ENCODE measurements at regions of chrX and their contacts with region 1.

Region 1: DNA sequence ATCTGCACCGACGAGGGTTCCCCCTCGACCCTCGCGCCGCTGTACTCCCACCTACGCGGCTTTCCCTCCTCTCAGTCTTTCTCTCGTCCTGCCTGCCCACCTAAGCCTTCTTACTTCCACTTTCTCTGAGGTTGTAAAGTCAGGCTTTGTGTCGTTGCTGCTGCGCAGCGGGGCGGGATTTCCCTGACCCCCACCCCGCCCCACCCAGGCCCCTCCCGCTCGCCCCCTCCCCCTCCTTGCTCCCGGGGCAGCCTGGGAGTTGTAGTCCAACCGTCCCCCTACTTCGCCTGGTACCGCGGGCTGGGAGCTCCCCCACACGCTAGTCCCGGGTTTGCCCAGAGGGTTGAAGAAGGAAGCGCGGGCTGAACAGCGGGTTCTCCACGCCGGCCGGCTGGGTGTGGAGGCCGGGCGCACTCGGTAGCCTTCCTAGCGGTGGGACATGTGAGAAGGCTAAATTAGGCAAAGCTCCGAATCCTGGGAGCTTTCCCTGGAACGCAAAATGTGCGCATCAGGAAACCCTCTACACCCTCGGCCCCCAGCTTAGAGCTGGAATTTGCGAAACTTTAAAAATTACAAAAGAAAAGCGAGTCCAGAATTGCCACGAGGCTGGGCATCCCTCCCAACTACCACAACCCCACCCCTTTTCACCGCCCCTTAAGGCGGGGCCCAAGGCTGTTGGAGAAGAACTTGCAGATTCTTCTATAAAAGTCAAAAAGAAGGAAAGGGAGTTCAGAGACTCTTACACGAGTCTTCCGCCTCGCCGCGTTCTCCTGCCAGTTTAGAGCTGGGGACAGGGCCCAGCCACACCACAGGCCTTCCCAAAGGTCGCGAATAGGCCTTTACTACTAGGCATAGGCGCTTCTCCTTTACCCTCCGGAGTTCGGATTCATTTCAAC is at the start of gene ATP11C:
- DNase-seq: peak; percentile 56 to 89
- ATAC-seq: peak; percentile 83 to 89
- H3K4me3 ChIP-seq: peak within 1 kb of the TSS; percentile 85
- H3K27ac ChIP-seq: peak within 1 kb of the TSS; percentile 88 to 99
- H3K4me1 ChIP-seq: no peaks in the 10 kb centered on the region
- CTCF ChIP-seq: peak; percentile 8; the same call in 1 of the 3 replicates
- EP300 ChIP-seq: no peak
- POLR2A ChIP-seq: peak; percentile 89
- RAD21 ChIP-seq: peak; percentile 25 to 53
- polyA plus RNA-seq, gene ATP11C: 28.6 and 34.3 TPM in 2 replicates

Region 2: DNA sequence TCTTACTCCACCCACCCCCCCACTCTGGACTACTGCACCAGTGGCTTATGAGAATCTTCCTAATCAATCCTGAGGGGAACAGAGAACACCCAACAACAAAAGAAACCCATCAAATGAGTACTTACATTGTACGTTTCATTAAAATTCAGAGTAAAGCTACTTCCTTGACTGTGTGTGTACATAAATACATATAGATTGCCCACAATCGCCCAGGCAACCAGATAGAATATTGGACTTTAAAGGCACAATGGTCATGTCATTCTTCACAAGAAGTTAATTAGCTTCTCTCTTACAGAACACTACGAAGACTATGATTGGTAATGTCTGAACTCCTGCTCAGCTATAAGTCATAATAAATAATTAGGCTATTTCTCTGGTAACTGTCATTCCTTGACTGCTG is 11.9 kb after region 1 on chrX:
- CTCF ChIA-PET with region 1: interaction called, 3 read pairs
- POLR2A ChIA-PET with region 1: interaction called, 16 read pairs
- DNase-seq: no peak
- ATAC-seq: no peak
- H3K4me3 ChIP-seq: no peak overlapping the region
- H3K27ac ChIP-seq: no peak overlapping the region
- H3K4me1 ChIP-seq: no peaks in the 10 kb centered on the region
- CTCF ChIP-seq: no peak
- EP300 ChIP-seq: no peak
- POLR2A ChIP-seq: no peak
- RAD21 ChIP-seq: no peak

Region 3: GRCh38 chrX:139982856-139983255 is 49.7 kb after region 1 on chrX:
- CTCF ChIA-PET with region 1: no interaction called
- POLR2A ChIA-PET with region 1: no interaction called
- DNase-seq: no peak
- ATAC-seq: no peak
- H3K4me3 ChIP-seq: no peak overlapping the region
- H3K27ac ChIP-seq: no peak overlapping the region
- H3K4me1 ChIP-seq: no peaks in the 10 kb centered on the region
- CTCF ChIP-seq: no peak
- EP300 ChIP-seq: no peak
- POLR2A ChIP-seq: no peak
- RAD21 ChIP-seq: no peak